CD4-positive, alpha-beta T cell (primary cell): ENCODE measurements at regions of chr9 and their contacts with region 1.

Region 1: GRCh38 chr9:132800038-132800648 is 77.9 kb downstream of the AK8 start:
- DNase-seq: peak; percentile 35 to 84 (median 58)
- ATAC-seq: peak; percentile 98
- H3K4me3 ChIP-seq: no peak overlapping the region
- H3K4me3 Mint-ChIP-seq: no peak overlapping the region
- H3K27ac ChIP-seq: no peak overlapping the region
- H3K27ac Mint-ChIP-seq: no peak overlapping the region
- H3K4me1 ChIP-seq: peaks cover 15% of the 10 kb centered on the region
- H3K4me1 Mint-ChIP-seq: no peaks in the 10 kb centered on the region
- H3K27me3 ChIP-seq: peaks cover 9 to 13% of the 10 kb centered on the region in 2 experiments
- H3K27me3 Mint-ChIP-seq: peaks cover 67% of the 10 kb centered on the region
- CTCF ChIP-seq: peak; percentile 92

Region 2: DNA sequence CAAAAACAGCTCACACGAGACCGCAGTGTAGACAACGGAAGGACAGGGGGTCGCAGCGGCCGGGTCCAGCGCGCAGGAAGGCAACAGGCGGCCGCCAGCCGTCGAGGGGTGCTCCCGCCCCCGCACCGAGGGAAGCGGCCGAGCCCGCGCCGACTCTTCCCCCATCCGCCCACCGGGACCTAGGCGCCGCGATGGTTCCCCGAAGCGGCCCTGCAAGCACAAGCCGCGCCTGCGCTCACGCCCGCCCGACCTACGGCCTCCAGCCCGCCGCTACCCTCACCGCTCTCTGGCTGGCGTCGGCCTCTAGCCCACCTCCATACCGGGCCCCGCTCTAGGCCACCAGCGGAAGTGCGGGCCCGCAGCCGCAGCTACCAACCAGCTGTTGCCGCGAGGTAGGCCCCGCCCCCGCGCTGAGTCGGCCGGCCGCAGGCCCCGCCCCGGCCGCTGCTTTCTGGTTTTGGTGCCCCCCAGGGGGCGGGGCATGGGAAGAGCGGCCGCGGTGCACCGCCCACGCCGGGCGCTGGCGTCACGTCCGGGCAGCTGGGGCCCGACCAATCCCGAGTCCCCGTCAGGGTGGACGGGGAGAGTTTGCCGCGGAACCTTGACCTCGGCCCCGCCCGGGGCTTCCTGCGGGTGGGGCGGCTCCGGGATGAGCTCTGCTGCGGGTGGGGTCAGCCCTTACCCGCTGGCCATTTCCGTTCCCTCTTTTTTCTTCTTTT is 445.3 kb before region 1 on chr9 and contains the start of gene SETX:
- CTCF ChIA-PET with region 1: no interaction called
- POLR2A ChIA-PET with region 1: no interaction called
- intact Hi-C with region 1: no loop called
- DNase-seq: peak; percentile 88 to 99 (median 96)
- ATAC-seq: peak; percentile 82
- H3K4me3 ChIP-seq: peak within 1 kb of the TSS; percentile 74
- H3K4me3 Mint-ChIP-seq: peak within 1 kb of the TSS; percentile 94
- H3K27ac ChIP-seq: peak within 1 kb of the TSS; percentile 91 to 96
- H3K27ac Mint-ChIP-seq: peak within 1 kb of the TSS; percentile 91
- H3K4me1 ChIP-seq: peaks cover 41% of the 10 kb centered on the region
- H3K4me1 Mint-ChIP-seq: peaks cover 47% of the 10 kb centered on the region
- H3K27me3 ChIP-seq: no peaks in the 10 kb centered on the region
- H3K27me3 Mint-ChIP-seq: no peaks in the 10 kb centered on the region
- CTCF ChIP-seq: no peak
- total RNA-seq, gene SETX: 36.1 to 37.7 TPM

Region 3: GRCh38 chr9:132507746-132508469 is 292.2 kb before region 1 on chr9:
- CTCF ChIA-PET with region 1: interaction called, 3 read pairs
- POLR2A ChIA-PET with region 1: no interaction called
- intact Hi-C with region 1: loop called (anchors 1 kb)
- DNase-seq: peak; percentile 49 to 80 (median 58)
- ATAC-seq: peak; percentile 63
- H3K4me3 ChIP-seq: no peak overlapping the region
- H3K4me3 Mint-ChIP-seq: no peak overlapping the region
- H3K27ac ChIP-seq: no peak overlapping the region
- H3K27ac Mint-ChIP-seq: no peak overlapping the region
- H3K4me1 ChIP-seq: peaks cover 22% of the 10 kb centered on the region
- H3K4me1 Mint-ChIP-seq: peaks cover 17% of the 10 kb centered on the region
- H3K27me3 ChIP-seq: peaks cover 0 to 4% of the 10 kb centered on the region in 2 experiments
- H3K27me3 Mint-ChIP-seq: peaks cover 4% of the 10 kb centered on the region
- CTCF ChIP-seq: peak; percentile 62

Region 4: DNA sequence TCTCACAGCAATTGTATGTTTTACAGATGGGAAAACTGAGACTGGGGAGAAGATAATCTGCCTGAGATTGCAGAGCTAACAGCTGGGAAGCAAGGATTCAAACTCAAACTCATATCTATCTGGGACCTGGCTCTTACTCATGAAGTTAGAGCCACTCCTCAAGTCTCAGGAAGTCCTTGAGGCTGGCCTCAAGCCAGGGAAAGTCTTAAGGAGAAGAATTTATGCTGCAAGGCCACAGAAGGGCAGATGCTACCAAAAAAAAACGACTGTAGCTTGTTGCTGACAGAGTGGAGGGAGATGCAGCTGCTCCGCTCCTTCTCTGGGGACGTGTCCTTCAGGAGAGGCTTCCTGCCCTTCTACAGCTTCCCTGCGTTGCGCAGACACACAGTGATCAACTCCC is 178.0 kb before region 1 on chr9:
- CTCF ChIA-PET with region 1: no interaction called
- POLR2A ChIA-PET with region 1: no interaction called
- intact Hi-C with region 1: loop called in 1 of 2 experiments (anchors 10 kb)
- DNase-seq: no peak
- ATAC-seq: no peak
- H3K4me3 ChIP-seq: no peak overlapping the region
- H3K4me3 Mint-ChIP-seq: no peak overlapping the region
- H3K27ac ChIP-seq: no peak overlapping the region
- H3K27ac Mint-ChIP-seq: no peak overlapping the region
- H3K4me1 ChIP-seq: no peaks in the 10 kb centered on the region
- H3K4me1 Mint-ChIP-seq: no peaks in the 10 kb centered on the region
- H3K27me3 ChIP-seq: no peaks in the 10 kb centered on the region
- H3K27me3 Mint-ChIP-seq: no peaks in the 10 kb centered on the region
- CTCF ChIP-seq: no peak

Region 5: GRCh38 chr9:132698989-132699388 is 101.2 kb before region 1 on chr9:
- CTCF ChIA-PET with region 1: no interaction called
- POLR2A ChIA-PET with region 1: no interaction called
- intact Hi-C with region 1: loop called in 1 of 2 experiments (anchors 5 kb)
- DNase-seq: no peak
- ATAC-seq: no peak
- H3K4me3 ChIP-seq: no peak overlapping the region
- H3K4me3 Mint-ChIP-seq: no peak overlapping the region
- H3K27ac ChIP-seq: no peak overlapping the region
- H3K27ac Mint-ChIP-seq: no peak overlapping the region
- H3K4me1 ChIP-seq: no peaks in the 10 kb centered on the region
- H3K4me1 Mint-ChIP-seq: no peaks in the 10 kb centered on the region
- H3K27me3 ChIP-seq: no peaks in the 10 kb centered on the region
- H3K27me3 Mint-ChIP-seq: peaks cover 8% of the 10 kb centered on the region
- CTCF ChIP-seq: no peak